ENCODE measurements at regions of chr2 and their contacts with region 1.

Region 1: GRCh38 chr2:74833418-74834233 is at the start of gene HK2:
- DNase-seq: peak; percentile 96
- ATAC-seq: peak; percentile 80
- H3K4me3 ChIP-seq: peak within 1 kb of the TSS; percentile 82
- H3K27ac ChIP-seq: peak within 1 kb of the TSS; percentile 68
- H3K4me1 ChIP-seq: peaks cover 42% of the 10 kb centered on the region
- H3K27me3 ChIP-seq: no peaks in the 10 kb centered on the region
- CTCF ChIP-seq: no peak
- total RNA-seq, gene HK2: 43.8 and 55.2 TPM in 2 replicates

Region 2: GRCh38 chr2:74646201-74646600 is 187.4 kb before region 1 on chr2:
- CTCF ChIA-PET with region 1: no interaction called
- POLR2A ChIA-PET with region 1: no interaction called
- intact Hi-C with region 1: no loop called
- DNase-seq: no peak
- ATAC-seq: no peak; the same call in 1 of the 2 replicates
- H3K4me3 ChIP-seq: no peak overlapping the region
- H3K27ac ChIP-seq: no peak overlapping the region
- H3K4me1 ChIP-seq: no peaks in the 10 kb centered on the region
- H3K27me3 ChIP-seq: no peaks in the 10 kb centered on the region
- CTCF ChIP-seq: no peak

Region 3: GRCh38 chr2:74715078-74715791 is 118.4 kb before region 1 on chr2:
- CTCF ChIA-PET with region 1: interaction called, 3 read pairs
- POLR2A ChIA-PET with region 1: no interaction called
- intact Hi-C with region 1: loop called (anchors 1 kb)
- DNase-seq: peak; percentile 93
- ATAC-seq: peak; percentile 62
- H3K4me3 ChIP-seq: peak overlapping the region; percentile 76
- H3K27ac ChIP-seq: peak overlapping the region; percentile 53
- H3K4me1 ChIP-seq: peaks cover 71% of the 10 kb centered on the region
- H3K27me3 ChIP-seq: no peaks in the 10 kb centered on the region
- CTCF ChIP-seq: peak; percentile 97

Region 4: DNA sequence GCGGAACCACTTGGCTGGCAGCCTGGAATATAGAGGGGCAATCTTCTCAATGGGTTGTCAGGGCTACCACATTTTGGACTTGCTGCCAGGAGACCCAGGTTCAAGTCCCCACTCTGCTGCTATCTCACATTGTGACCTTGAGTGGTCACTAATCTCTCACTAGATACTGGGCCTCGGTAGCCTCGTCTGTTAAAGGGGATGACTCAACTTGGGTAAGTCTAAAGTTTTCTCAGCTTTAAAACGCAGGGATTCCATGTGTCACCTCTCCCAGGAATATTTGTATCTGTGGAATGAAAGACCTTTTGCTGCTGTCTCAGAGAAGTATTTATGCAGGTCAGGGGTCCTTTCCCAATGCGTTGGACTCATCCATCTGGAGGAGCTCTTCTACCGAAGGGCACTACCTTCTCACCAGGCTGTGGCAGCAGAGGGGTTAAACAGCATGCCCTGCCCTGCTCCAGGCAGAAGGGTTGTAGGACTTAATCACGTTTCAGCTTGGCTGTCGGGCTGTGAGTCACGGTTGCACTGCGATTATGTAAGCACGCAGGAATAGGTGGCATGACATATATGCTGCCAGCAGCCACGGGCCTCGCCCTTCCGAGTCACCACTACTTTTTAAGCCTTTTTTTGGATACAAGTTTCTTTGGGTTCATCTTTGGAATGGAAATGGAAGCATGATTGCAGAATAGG is 93.1 kb before region 1 on chr2:
- CTCF ChIA-PET with region 1: no interaction called
- POLR2A ChIA-PET with region 1: interaction called, 13 read pairs
- intact Hi-C with region 1: loop called (anchors 2 kb)
- DNase-seq: peak; percentile 98
- ATAC-seq: peak; percentile 93
- H3K4me3 ChIP-seq: peak overlapping the region; percentile 30; the same call in 1 of the 2 replicates
- H3K27ac ChIP-seq: peak overlapping the region; percentile 89
- H3K4me1 ChIP-seq: peaks cover 44% of the 10 kb centered on the region
- H3K27me3 ChIP-seq: no peaks in the 10 kb centered on the region
- CTCF ChIP-seq: no peak

Region 5: GRCh38 chr2:74806920-74807319 is 26.7 kb before region 1 on chr2:
- CTCF ChIA-PET with region 1: no interaction called
- POLR2A ChIA-PET with region 1: no interaction called
- intact Hi-C with region 1: no loop called
- DNase-seq: no peak
- ATAC-seq: no peak
- H3K4me3 ChIP-seq: no peak overlapping the region
- H3K27ac ChIP-seq: no peak overlapping the region
- H3K4me1 ChIP-seq: no peaks in the 10 kb centered on the region
- H3K27me3 ChIP-seq: no peaks in the 10 kb centered on the region
- CTCF ChIP-seq: no peak

Region 6: GRCh38 chr2:74845217-74846011 is 11.8 kb after region 1 on chr2:
- CTCF ChIA-PET with region 1: no interaction called
- POLR2A ChIA-PET with region 1: no interaction called
- intact Hi-C with region 1: loop called (anchors 1 kb)
- DNase-seq: peak; percentile 98
- ATAC-seq: peak; percentile 90
- H3K4me3 ChIP-seq: peak overlapping the region; percentile 53
- H3K27ac ChIP-seq: peak overlapping the region; percentile 99
- H3K4me1 ChIP-seq: peaks cover 95% of the 10 kb centered on the region
- H3K27me3 ChIP-seq: no peaks in the 10 kb centered on the region
- CTCF ChIP-seq: no peak

Region 7: GRCh38 chr2:74876081-74876886 is 42.7 kb after region 1 on chr2:
- CTCF ChIA-PET with region 1: interaction called, 7 read pairs
- POLR2A ChIA-PET with region 1: no interaction called
- intact Hi-C with region 1: loop called (anchors 1 kb)
- DNase-seq: peak; percentile 82
- ATAC-seq: peak; percentile 77
- H3K4me3 ChIP-seq: no peak overlapping the region
- H3K27ac ChIP-seq: no peak overlapping the region
- H3K4me1 ChIP-seq: no peaks in the 10 kb centered on the region
- H3K27me3 ChIP-seq: no peaks in the 10 kb centered on the region
- CTCF ChIP-seq: peak; percentile 83